CD14-positive monocyte (primary cell): ENCODE measurements at regions of chr3 and their contacts with region 1.

Region 1: DNA sequence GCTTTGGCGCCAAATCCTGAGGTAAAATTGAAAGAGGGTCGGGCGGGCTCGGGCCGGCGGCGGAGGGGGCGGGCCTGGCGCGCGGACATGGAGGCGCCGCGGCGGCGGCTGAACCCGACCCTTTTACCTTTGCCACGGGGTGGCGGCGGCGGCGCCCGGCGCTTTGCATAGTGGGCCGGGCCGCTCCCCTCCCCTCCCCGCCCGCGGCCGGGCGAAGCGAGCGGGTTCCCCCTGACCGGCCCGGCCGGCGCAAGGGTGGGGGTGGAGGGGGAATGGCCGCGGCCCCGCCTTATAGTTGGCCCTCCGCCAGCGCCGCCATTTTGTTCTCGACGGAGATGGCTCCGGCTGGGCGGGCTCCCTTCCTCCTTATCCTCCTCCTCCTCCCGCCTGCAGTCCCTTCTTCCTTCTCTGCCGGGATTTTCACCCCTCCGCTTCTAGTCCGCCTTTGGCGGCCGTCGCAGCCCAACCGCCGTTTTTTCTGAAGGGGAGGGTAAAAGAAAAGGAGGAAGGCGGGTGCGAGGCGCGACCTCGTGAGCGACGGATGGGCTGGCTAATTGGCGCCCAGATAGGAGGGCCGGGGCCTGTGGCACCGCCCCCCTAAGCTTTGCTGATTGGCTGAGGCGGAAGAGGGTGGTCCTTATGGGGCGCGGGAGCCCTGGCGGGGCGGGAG is 638 bp downstream of the NR2C2 start:
- DNase-seq: peak; percentile 94 to 97 (median 96)
- H3K4me3 ChIP-seq: peak overlapping the region; percentile 74 to 90 (median 81)
- H3K4me3 Mint-ChIP-seq: peak overlapping the region; percentile 92 to 98
- H3K27ac ChIP-seq: peak overlapping the region; percentile 98 to 99
- H3K27ac Mint-ChIP-seq: peak overlapping the region; percentile 98 to 100 (median 100)
- H3K4me1 ChIP-seq: peaks cover 22 to 29% of the 10 kb centered on the region in 2 donors
- H3K4me1 Mint-ChIP-seq: peaks cover 30% of the 10 kb centered on the region
- H3K27me3 ChIP-seq: no peaks in the 10 kb centered on the region
- H3K27me3 Mint-ChIP-seq: no peaks in the 10 kb centered on the region
- CTCF ChIP-seq: no peak

Region 2: GRCh38 chr3:14178247-14179113 is 769.5 kb before region 1 on chr3 and contains the starts of genes LSM3 and XPC:
- intact Hi-C with region 1: loop called in 1 of 2 experiments (anchors 5 kb)
- DNase-seq: peak; percentile 98 to 99 (median 98)
- H3K4me3 ChIP-seq: peak within 1 kb of the TSS; percentile 55 to 93 (median 87)
- H3K4me3 Mint-ChIP-seq: peak within 1 kb of the TSS; percentile 92 to 97
- H3K27ac ChIP-seq: peak within 1 kb of the TSS; percentile 61 to 94
- H3K27ac Mint-ChIP-seq: peak within 1 kb of the TSS; percentile 95 to 100 (median 98)
- H3K4me1 ChIP-seq: peaks cover 14 to 21% of the 10 kb centered on the region in 2 donors
- H3K4me1 Mint-ChIP-seq: peaks cover 34% of the 10 kb centered on the region
- H3K27me3 ChIP-seq: no peaks in the 10 kb centered on the region
- H3K27me3 Mint-ChIP-seq: peaks cover 0 to 5% (median 0%) of the 10 kb centered on the region in 3 donors
- CTCF ChIP-seq: no peak
- polyA plus RNA-seq, gene LSM3: 4.1 to 23.2 (median 19.8) TPM
- polyA plus RNA-seq, gene XPC: 13.4 to 22.0 (median 15.5) TPM

Region 3: DNA sequence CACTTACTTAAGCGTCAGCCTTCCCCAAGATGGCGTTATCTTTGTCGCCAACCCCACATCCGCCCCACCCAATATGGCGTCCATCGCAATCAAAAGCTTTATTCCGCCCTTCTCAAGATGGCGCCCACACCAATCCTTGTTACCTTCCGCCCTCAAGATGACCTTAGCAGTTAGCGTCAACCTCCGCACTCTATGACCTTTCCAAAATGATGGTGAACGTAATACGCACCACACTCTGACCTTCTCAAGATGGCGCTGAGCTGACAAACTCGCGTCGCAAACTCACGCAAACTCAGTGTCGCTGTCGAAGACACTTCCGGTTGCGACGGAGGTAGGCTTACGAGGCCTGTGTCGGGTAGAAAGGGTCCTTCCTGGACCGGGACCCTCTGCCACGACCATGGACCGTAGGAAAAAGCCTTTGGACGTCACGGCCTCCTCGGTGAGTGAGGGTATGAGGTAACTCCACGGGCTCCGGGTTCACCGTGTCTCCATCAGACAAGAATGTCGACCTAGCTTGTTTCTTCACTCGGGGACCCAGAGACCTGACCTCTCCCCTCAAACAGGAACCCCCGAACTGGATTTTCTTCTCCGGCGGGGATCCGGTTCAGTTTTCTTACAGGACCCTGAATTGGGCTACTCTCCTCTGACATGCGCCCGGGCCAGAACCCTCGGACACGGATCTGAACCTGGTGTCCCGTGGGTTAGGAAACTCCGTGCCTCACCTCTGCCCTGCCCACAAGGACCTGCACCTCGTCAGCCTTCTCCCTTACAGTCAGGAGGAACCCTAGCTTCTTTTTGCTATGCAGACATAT is 296.4 kb before region 1 on chr3 and contains the start of gene CCDC174:
- intact Hi-C with region 1: loop called (anchors 2 to 10 kb)
- DNase-seq: peak; percentile 99 to 100 (median 99)
- H3K4me3 ChIP-seq: peak within 1 kb of the TSS; percentile 88 to 93 (median 89)
- H3K4me3 Mint-ChIP-seq: peak within 1 kb of the TSS; percentile 94 to 97
- H3K27ac ChIP-seq: peak within 1 kb of the TSS; percentile 94 to 97
- H3K27ac Mint-ChIP-seq: peak within 1 kb of the TSS; percentile 97 to 99 (median 98)
- H3K4me1 ChIP-seq: peaks cover 21 to 39% of the 10 kb centered on the region in 2 donors
- H3K4me1 Mint-ChIP-seq: peaks cover 37% of the 10 kb centered on the region
- H3K27me3 ChIP-seq: no peaks in the 10 kb centered on the region
- H3K27me3 Mint-ChIP-seq: peaks cover 0 to 3% (median 2%) of the 10 kb centered on the region in 3 donors
- CTCF ChIP-seq: no peak
- polyA plus RNA-seq, gene CCDC174: 6.2 to 7.9 (median 7.4) TPM

Region 4: GRCh38 chr3:15064835-15065549 is 117.0 kb after region 1 on chr3 and contains the start of gene MRPS25:
- intact Hi-C with region 1: loop called (anchors 10 kb)
- DNase-seq: peak; percentile 87 to 90 (median 87)
- H3K4me3 ChIP-seq: peak within 1 kb of the TSS; percentile 68 to 94 (median 80)
- H3K4me3 Mint-ChIP-seq: peak within 1 kb of the TSS; percentile 96 to 97
- H3K27ac ChIP-seq: peak within 1 kb of the TSS; percentile 69 to 84
- H3K27ac Mint-ChIP-seq: peak within 1 kb of the TSS; percentile 90 to 97 (median 95)
- H3K4me1 ChIP-seq: peaks cover 20 to 25% of the 10 kb centered on the region in 2 donors
- H3K4me1 Mint-ChIP-seq: peaks cover 21% of the 10 kb centered on the region
- H3K27me3 ChIP-seq: no peaks in the 10 kb centered on the region
- H3K27me3 Mint-ChIP-seq: peaks cover 0 to 2% (median 0%) of the 10 kb centered on the region in 3 donors
- CTCF ChIP-seq: no peak
- polyA plus RNA-seq, gene MRPS25: 23.7 to 60.7 (median 24.6) TPM

Region 5: DNA sequence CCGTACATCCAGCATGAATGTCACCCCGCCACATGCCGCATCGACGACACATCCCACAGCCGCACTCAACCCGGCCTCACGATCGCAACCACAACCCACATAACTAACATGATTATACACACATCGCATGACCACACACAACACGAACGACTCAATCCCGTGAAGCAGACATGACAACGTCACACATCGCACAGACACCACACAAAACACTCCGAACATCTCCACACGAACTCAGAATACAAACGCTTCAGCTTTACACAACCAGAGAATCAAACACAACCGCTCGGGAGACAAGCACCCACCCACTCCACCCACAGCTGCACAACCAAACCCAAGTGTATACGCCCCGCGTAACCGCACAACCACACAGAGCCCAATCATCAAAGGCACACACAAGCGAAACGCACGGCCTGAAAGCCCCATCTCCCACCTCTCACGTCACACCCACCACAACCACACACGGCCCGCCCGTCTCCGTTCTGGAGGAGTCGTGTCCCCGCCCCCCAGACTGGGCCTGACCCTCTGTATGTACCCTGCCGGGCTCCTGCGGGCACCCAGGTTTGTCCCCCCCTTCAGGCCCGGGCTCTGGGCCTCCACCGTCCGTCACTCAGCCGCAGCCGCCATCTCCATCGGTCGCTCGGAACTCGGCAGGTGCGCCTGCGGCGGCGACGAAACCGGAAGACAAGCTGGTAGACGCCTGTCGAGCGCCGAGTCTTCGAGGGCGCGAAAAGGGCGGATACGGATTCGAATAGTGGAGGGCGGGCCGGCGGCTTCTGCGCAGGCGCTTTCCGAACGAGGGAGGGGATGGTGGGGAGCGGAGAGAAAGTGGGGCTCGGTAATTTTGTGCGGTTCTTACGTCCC is 150.7 kb after region 1 on chr3 and contains the start of gene RBSN:
- intact Hi-C with region 1: loop called in 1 of 2 experiments (anchors 10 kb)
- DNase-seq: peak; percentile 90 to 91 (median 90)
- H3K4me3 ChIP-seq: peak within 1 kb of the TSS; percentile 65 to 88 (median 84)
- H3K4me3 Mint-ChIP-seq: peak within 1 kb of the TSS; percentile 88 to 100
- H3K27ac ChIP-seq: peak within 1 kb of the TSS; percentile 73 to 94
- H3K27ac Mint-ChIP-seq: peak within 1 kb of the TSS; percentile 82 to 96 (median 91)
- H3K4me1 ChIP-seq: peaks cover 34 to 39% of the 10 kb centered on the region in 2 donors
- H3K4me1 Mint-ChIP-seq: peaks cover 41% of the 10 kb centered on the region
- H3K27me3 ChIP-seq: no peaks in the 10 kb centered on the region
- H3K27me3 Mint-ChIP-seq: no peaks in the 10 kb centered on the region
- CTCF ChIP-seq: no peak
- polyA plus RNA-seq, gene RBSN: 6.7 to 10.1 (median 8.1) TPM

Region 6: DNA sequence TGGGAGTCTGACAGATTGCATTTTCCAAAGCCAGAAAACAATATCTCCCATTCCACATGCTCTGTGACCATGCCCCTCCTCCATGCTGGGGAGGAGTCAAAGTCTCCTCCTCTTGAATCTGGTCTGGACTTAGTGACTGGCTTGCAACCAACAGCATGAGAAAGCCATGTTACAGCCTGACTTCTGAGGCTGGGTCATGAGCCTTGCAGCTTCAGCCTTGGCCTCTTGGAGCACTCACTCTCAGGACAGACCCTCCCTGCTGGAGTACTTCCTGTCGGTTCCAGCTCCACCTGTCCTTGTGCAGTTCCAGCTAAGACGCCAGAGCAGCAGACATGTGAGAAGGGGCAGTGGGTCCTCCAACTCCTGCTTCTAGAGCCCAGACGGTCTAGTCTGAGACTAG is 200.6 kb after region 1 on chr3:
- intact Hi-C with region 1: no loop called
- DNase-seq: no peak
- H3K4me3 ChIP-seq: no peak overlapping the region
- H3K4me3 Mint-ChIP-seq: no peak overlapping the region
- H3K27ac ChIP-seq: no peak overlapping the region
- H3K27ac Mint-ChIP-seq: no peak overlapping the region
- H3K4me1 ChIP-seq: no peaks in the 10 kb centered on the region
- H3K4me1 Mint-ChIP-seq: no peaks in the 10 kb centered on the region
- H3K27me3 ChIP-seq: peaks cover 10 to 13% of the 10 kb centered on the region in 2 donors
- H3K27me3 Mint-ChIP-seq: peaks cover 5 to 9% (median 8%) of the 10 kb centered on the region in 3 donors
- CTCF ChIP-seq: no peak

Region 7: GRCh38 chr3:15287565-15288330 is 339.7 kb after region 1 on chr3:
- intact Hi-C with region 1: loop called in 1 of 2 experiments (anchors 5 kb)
- DNase-seq: peak; percentile 91 to 98 (median 97)
- H3K4me3 ChIP-seq: peak overlapping the region in 1 of 3 experiments; percentile 21
- H3K4me3 Mint-ChIP-seq: peak overlapping the region in 1 of 2 donors; percentile 48
- H3K27ac ChIP-seq: peak overlapping the region; percentile 77 to 95
- H3K27ac Mint-ChIP-seq: peak overlapping the region; percentile 96 to 100 (median 98)
- H3K4me1 ChIP-seq: peaks cover 63 to 64% of the 10 kb centered on the region in 2 donors
- H3K4me1 Mint-ChIP-seq: peaks cover 68% of the 10 kb centered on the region
- H3K27me3 ChIP-seq: no peaks in the 10 kb centered on the region
- H3K27me3 Mint-ChIP-seq: peaks cover 0 to 5% (median 0%) of the 10 kb centered on the region in 3 donors
- CTCF ChIP-seq: no peak

Region 8: GRCh38 chr3:15601397-15602145 is 653.5 kb after region 1 on chr3 and contains the starts of genes BTD and HACL1:
- intact Hi-C with region 1: loop called in 1 of 2 experiments (anchors 10 kb)
- DNase-seq: peak; percentile 95 to 98 (median 96)
- H3K4me3 ChIP-seq: peak within 1 kb of the TSS; percentile 61 to 91 (median 88)
- H3K4me3 Mint-ChIP-seq: peak within 1 kb of the TSS; percentile 96 to 98
- H3K27ac ChIP-seq: peak within 1 kb of the TSS; percentile 69 to 96
- H3K27ac Mint-ChIP-seq: peak within 1 kb of the TSS; percentile 94 to 100 (median 99)
- H3K4me1 ChIP-seq: peaks cover 16 to 20% of the 10 kb centered on the region in 2 donors
- H3K4me1 Mint-ChIP-seq: peaks cover 17% of the 10 kb centered on the region
- H3K27me3 ChIP-seq: no peaks in the 10 kb centered on the region
- H3K27me3 Mint-ChIP-seq: no peaks in the 10 kb centered on the region
- CTCF ChIP-seq: peak; percentile 27
- polyA plus RNA-seq, gene BTD: 13.2 to 24.0 (median 19.3) TPM
- polyA plus RNA-seq, gene HACL1: 12.3 to 27.2 (median 22.3) TPM